ENCODE measurements at regions of chr22 and their contacts with region 1.

Region 1: GRCh38 chr22:46296257-46297150 is at the start of gene GTSE1:
- DNase-seq: peak; percentile 99
- ATAC-seq: peak; percentile 96
- H3K4me3 ChIP-seq: peak within 1 kb of the TSS; percentile 11 to 76 (median 63)
- H3K4me3 Mint-ChIP-seq: peak within 1 kb of the TSS; percentile 85
- H3K27ac ChIP-seq: peak within 1 kb of the TSS; percentile 88 to 95
- H3K27ac Mint-ChIP-seq: peak within 1 kb of the TSS; percentile 99
- H3K4me1 ChIP-seq: peaks cover 29 to 39% of the 10 kb centered on the region in 2 donors
- H3K4me1 Mint-ChIP-seq: peaks cover 41% of the 10 kb centered on the region
- H3K27me3 ChIP-seq: peaks cover 0 to 5% (median 2%) of the 10 kb centered on the region in 4 experiments
- H3K27me3 Mint-ChIP-seq: no peaks in the 10 kb centered on the region
- CTCF ChIP-seq: peak; percentile 19
- total RNA-seq, gene GTSE1: 0.17 and 0.27 TPM in 2 replicates

Region 2: GRCh38 chr22:46006379-46007002 is 290.0 kb before region 1 on chr22:
- CTCF ChIA-PET with region 1: interaction called, 10 read pairs
- POLR2A ChIA-PET with region 1: no interaction called
- intact Hi-C with region 1: no loop called
- DNase-seq: peak; percentile 88
- ATAC-seq: peak; percentile 90
- H3K4me3 ChIP-seq: no peak overlapping the region
- H3K4me3 Mint-ChIP-seq: no peak overlapping the region
- H3K27ac ChIP-seq: no peak overlapping the region
- H3K27ac Mint-ChIP-seq: no peak overlapping the region
- H3K4me1 ChIP-seq: peaks cover 3 to 10% of the 10 kb centered on the region in 2 donors
- H3K4me1 Mint-ChIP-seq: peaks cover 6% of the 10 kb centered on the region
- H3K27me3 ChIP-seq: peaks cover 0 to 13% (median 0%) of the 10 kb centered on the region in 4 experiments
- H3K27me3 Mint-ChIP-seq: no peaks in the 10 kb centered on the region
- CTCF ChIP-seq: peak; percentile 90

Region 3: GRCh38 chr22:46122511-46122971 is 174.0 kb before region 1 on chr22:
- CTCF ChIA-PET with region 1: interaction called, 21 read pairs
- POLR2A ChIA-PET with region 1: interaction called, 4 read pairs
- intact Hi-C with region 1: loop called (anchors 1 kb)
- DNase-seq: peak; percentile 79
- ATAC-seq: peak; percentile 71
- H3K4me3 ChIP-seq: no peak overlapping the region
- H3K4me3 Mint-ChIP-seq: no peak overlapping the region
- H3K27ac ChIP-seq: no peak overlapping the region
- H3K27ac Mint-ChIP-seq: no peak overlapping the region
- H3K4me1 ChIP-seq: peaks cover 4 to 9% of the 10 kb centered on the region in 2 donors
- H3K4me1 Mint-ChIP-seq: no peaks in the 10 kb centered on the region
- H3K27me3 ChIP-seq: no peaks in the 10 kb centered on the region
- H3K27me3 Mint-ChIP-seq: no peaks in the 10 kb centered on the region
- CTCF ChIP-seq: peak; percentile 96

Region 4: DNA sequence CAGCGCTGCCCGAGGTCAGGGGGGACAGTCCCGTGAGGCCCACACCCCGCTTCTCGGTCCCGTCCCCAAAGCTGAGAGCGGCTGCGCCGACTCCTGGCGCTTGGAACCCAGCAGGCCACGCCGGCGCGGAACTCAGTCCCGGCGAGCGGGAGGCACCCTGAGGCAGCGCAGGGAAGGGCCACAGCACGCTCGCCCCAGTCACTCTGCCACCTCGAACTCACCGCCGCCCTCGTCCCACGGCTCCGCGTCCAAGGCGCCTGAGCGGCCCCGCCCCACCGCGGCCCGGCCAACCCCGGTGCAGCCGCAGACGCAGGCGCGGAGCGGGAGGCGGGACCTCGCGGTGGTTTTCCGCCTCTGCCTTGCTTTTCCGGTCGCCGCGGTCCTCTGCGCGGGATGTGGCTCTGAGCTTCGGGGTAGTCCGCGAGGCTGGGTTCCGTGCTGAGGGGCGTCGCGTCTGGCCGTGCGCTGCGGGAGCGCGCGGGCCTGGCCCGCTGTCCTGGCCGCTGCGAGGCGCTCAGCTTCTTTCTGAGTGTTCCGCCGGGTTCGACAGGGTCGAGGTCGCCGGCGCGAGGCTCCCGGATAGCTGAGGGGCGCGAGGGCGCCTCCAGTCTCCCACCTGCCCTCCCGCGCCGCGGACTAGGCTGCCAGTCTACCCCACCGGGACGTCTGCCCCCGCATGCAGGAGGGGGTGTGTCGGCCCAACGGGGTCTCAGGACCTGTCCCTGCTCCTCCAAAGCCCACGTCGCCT is 46.3 kb before region 1 on chr22 and contains the start of gene CDPF1:
- CTCF ChIA-PET with region 1: interaction called, 5 read pairs
- POLR2A ChIA-PET with region 1: interaction called, 11 read pairs
- intact Hi-C with region 1: loop called (anchors 1 kb)
- DNase-seq: peak; percentile 91
- ATAC-seq: peak; percentile 96
- H3K4me3 ChIP-seq: peak within 1 kb of the TSS in 4 of 5 experiments; percentile 72 to 85 (median 82)
- H3K4me3 Mint-ChIP-seq: peak within 1 kb of the TSS; percentile 87
- H3K27ac ChIP-seq: peak within 1 kb of the TSS; percentile 35 to 75
- H3K27ac Mint-ChIP-seq: peak within 1 kb of the TSS; percentile 80
- H3K4me1 ChIP-seq: peaks cover 14% of the 10 kb centered on the region in 2 donors
- H3K4me1 Mint-ChIP-seq: peaks cover 18% of the 10 kb centered on the region
- H3K27me3 ChIP-seq: no peaks in the 10 kb centered on the region
- H3K27me3 Mint-ChIP-seq: no peaks in the 10 kb centered on the region
- CTCF ChIP-seq: no peak
- total RNA-seq, gene CDPF1: 9.8 TPM in 2 replicates

Region 5: DNA sequence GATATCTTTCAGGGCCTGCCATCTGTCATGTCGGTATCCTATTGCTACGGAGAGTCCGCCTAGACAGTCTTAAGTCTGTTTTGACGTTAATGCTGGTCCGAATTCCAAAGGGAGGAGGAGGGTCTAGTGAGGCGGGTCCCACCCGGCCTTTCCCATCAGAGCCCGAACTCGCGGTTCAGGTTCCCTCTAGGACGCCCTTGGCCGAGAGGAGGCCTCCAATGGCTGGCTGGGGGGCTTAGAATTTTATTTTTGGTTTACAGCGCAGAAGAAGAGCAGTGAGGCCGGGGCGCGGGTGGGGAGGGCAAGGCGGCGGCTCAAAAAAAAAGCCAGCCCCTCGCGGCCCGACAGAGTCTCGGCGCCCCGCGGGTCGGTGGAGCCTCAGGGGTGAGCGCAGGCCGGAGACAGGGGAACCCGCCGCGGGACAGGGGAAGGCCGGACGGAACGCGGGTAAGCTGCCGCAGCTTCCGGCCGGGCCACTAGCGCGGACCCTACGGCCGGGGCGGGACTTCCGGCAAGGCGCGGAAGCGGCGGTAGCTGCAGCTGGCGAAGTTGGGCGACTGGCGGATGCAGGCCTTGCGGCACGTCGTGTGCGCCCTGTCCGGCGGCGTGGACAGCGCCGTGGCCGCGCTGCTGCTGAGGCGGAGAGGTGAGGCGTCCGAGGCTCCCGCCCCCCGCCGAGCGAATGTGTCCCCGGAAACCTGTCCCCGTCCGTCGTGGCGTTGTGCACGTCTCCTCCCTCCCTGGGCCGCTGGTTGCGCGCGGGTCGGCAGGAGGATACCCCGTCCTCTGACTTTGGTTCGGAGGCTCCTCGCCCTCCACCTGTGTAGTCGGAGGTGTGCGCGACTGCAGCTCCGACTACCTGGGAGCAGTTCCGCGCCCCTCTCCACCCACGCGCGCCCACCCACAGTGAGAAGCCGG is 39.0 kb after region 1 on chr22 and contains the start of gene TRMU:
- CTCF ChIA-PET with region 1: no interaction called
- POLR2A ChIA-PET with region 1: no interaction called
- intact Hi-C with region 1: loop called (anchors 1 kb)
- DNase-seq: peak; percentile 87
- ATAC-seq: peak; percentile 92
- H3K4me3 ChIP-seq: peak within 1 kb of the TSS; percentile 66 to 93 (median 88)
- H3K4me3 Mint-ChIP-seq: peak within 1 kb of the TSS; percentile 91
- H3K27ac ChIP-seq: peak within 1 kb of the TSS; percentile 67 to 90
- H3K27ac Mint-ChIP-seq: peak within 1 kb of the TSS; percentile 90
- H3K4me1 ChIP-seq: peaks cover 13 to 16% of the 10 kb centered on the region in 2 donors
- H3K4me1 Mint-ChIP-seq: peaks cover 21% of the 10 kb centered on the region
- H3K27me3 ChIP-seq: no peaks in the 10 kb centered on the region
- H3K27me3 Mint-ChIP-seq: no peaks in the 10 kb centered on the region
- CTCF ChIP-seq: no peak
- total RNA-seq, gene TRMU: 76.9 and 80.6 TPM in 2 replicates